GM18951 (cell line): ENCODE measurements at regions of chr18 and their contacts with region 1.

Region 1: DNA sequence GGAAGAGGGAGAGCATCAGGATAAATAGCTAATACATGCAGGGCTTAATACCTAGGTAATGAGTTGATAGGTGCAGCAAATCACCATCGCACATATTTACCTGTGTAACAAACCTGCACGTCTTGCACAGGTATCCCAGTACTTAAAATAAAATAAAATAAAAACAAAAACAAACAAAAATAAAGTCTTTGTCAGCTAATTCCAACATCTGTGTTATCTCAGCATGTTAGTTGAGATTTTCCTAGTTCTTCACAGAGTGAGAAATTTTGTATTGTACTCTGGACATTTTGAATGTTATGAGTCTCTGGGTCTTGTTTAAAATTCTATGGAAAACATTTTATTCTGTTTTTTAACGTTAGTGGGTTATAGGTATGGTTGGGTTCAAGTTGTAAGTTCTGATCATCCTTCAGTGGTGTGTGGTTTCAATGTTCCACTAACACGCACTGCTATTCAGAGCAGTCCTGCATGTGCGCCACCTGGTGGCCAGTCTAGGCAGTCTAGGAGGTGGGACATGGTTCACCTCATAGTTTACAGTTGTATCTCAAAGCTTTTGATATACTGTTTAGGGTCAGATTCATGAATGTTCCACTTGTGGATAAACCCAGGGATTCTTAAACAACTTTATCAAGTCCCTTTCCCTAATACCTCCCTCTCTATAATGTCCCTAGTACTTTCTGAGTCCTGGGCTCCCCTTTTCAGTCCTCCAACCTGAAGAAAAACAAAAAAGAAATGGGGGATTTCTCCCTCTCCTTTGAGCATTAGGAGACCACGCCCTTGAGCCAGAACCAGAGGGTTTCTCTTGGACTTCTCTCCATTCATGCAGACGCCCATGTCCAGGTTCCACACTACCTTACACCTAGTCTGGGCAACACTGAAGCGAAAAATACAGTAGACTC is 213.4 kb upstream of the GATA6 start:
- POLR2A ChIP-seq: no peak

Region 2: DNA sequence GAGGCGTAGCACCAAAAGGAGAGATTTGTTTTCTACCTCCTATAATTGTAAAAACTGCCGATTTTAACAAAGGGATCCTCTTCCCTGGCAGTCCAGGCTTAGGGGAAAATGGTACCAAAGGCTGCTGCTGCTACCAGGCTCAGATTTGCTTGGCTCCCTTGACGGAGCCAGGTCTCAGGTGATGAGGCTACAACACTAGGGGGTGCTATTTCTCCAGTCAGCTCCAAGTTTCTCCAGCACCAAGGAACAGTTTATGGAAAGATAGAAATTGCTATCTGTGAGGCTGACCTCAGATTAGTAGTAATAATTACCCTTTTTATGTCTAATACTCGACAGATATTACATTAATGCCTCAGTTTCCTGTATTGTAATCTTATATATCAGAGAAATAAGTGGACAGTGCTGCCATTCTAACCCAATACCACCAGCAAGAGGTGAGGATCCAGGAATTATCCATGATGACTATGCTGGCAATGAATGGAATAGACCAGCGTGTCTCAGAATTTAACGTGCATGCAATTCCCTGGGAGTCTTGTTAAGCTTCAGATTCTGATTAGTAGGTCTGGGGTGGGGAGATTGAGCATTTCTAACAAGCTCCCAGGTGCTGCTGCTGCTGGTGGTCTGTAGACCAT is 466.8 kb before region 1 on chr18:
- in situ Hi-C with region 1: loop called (anchors 25 kb)
- POLR2A ChIP-seq: no peak

Region 3: DNA sequence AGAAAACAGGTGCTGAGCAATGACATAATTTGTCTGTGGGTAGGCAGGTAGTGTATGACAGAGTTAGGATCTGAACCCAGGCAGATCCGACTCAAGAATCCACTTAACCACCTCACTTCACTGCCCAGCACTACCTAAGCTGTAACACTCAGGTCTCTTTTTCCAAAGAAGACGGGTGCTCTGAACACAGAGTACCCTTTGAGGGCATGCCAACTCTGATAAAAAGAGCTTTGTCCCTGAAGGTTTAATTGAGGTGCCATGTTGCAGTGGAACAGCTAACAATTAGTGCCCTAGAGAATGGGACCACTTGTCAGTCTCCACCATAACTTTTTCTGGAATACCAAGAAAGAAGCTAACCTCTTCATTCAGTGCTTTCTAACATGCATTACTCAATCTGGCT is 262.7 kb before region 1 on chr18:
- in situ Hi-C with region 1: no loop called
- POLR2A ChIP-seq: no peak